B cell (primary cell): ENCODE measurements at regions of chr12 and their contacts with region 1.

Region 1: DNA sequence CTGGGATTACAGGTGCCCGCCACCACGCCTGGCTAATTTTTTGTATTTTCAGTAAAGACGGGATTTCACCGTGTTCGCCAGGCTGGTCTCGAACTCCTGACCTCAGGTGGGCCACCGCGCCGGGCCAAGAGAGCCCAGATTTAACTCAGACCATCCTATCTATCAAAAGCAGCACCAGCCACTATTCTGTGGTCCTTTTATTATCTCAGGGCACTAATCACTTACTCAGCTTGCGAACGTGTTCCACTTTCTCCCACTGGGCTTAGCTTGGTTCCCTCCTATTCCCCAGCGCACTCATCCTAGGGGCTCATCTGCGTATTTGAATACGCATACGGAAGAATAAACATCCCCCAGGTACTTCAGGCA is 16.2 kb upstream of the AACS start:
- DNase-seq: no peak
- ATAC-seq: no peak
- H3K4me3 ChIP-seq: peak overlapping the region; percentile 40 to 82 (median 64)
- H3K4me3 Mint-ChIP-seq: peak overlapping the region; percentile 94
- H3K27ac ChIP-seq: peak overlapping the region in 1 of 2 donors; percentile 26
- H3K27ac Mint-ChIP-seq: peak overlapping the region; percentile 90
- H3K4me1 ChIP-seq: peaks cover 0 to 8% of the 10 kb centered on the region in 2 donors
- H3K4me1 Mint-ChIP-seq: peaks cover 7% of the 10 kb centered on the region
- H3K27me3 ChIP-seq: no peaks in the 10 kb centered on the region
- H3K27me3 Mint-ChIP-seq: no peaks in the 10 kb centered on the region
- CTCF ChIP-seq: no peak

Region 2: GRCh38 chr12:125065021-125065795 is 16.1 kb after region 1 on chr12 and contains the start of gene AACS:
- CTCF ChIA-PET with region 1: no interaction called
- POLR2A ChIA-PET with region 1: no interaction called
- intact Hi-C with region 1: loop called (anchors 1 kb)
- DNase-seq: peak; percentile 85
- ATAC-seq: peak; percentile 99
- H3K4me3 ChIP-seq: peak within 1 kb of the TSS; percentile 40 to 79 (median 74)
- H3K4me3 Mint-ChIP-seq: peak within 1 kb of the TSS; percentile 85
- H3K27ac ChIP-seq: peak within 1 kb of the TSS in 1 of 2 donors; percentile 72
- H3K27ac Mint-ChIP-seq: peak within 1 kb of the TSS; percentile 26
- H3K4me1 ChIP-seq: peaks cover 10 to 12% of the 10 kb centered on the region in 2 donors
- H3K4me1 Mint-ChIP-seq: peaks cover 13% of the 10 kb centered on the region
- H3K27me3 ChIP-seq: peaks cover 0 to 6% (median 0%) of the 10 kb centered on the region in 4 experiments
- H3K27me3 Mint-ChIP-seq: peaks cover 6% of the 10 kb centered on the region
- CTCF ChIP-seq: no peak
- total RNA-seq, gene AACS: 20.8 and 27.5 TPM in 2 replicates

Region 3: GRCh38 chr12:125092872-125093680 is 44.0 kb after region 1 on chr12:
- CTCF ChIA-PET with region 1: no interaction called
- POLR2A ChIA-PET with region 1: no interaction called
- intact Hi-C with region 1: no loop called
- DNase-seq: no peak
- ATAC-seq: no peak
- H3K4me3 ChIP-seq: no peak overlapping the region
- H3K4me3 Mint-ChIP-seq: no peak overlapping the region
- H3K27ac ChIP-seq: no peak overlapping the region
- H3K27ac Mint-ChIP-seq: no peak overlapping the region
- H3K4me1 ChIP-seq: no peaks in the 10 kb centered on the region
- H3K4me1 Mint-ChIP-seq: no peaks in the 10 kb centered on the region
- H3K27me3 ChIP-seq: no peaks in the 10 kb centered on the region
- H3K27me3 Mint-ChIP-seq: no peaks in the 10 kb centered on the region
- CTCF ChIP-seq: no peak